ENCODE measurements at regions of chr6 and their contacts with region 1.

Region 1: GRCh38 chr6:146369866-146370265 is 173.8 kb upstream of the RAB32 start:
- DNase-seq: no peak
- ATAC-seq: no peak
- H3K4me3 ChIP-seq: no peak overlapping the region
- H3K27ac ChIP-seq: no peak overlapping the region
- H3K4me1 ChIP-seq: no peaks in the 10 kb centered on the region
- H3K27me3 ChIP-seq: no peaks in the 10 kb centered on the region
- CTCF ChIP-seq: no peak
- EP300 ChIP-seq: no peak
- POLR2A ChIP-seq: no peak
- RAD21 ChIP-seq: no peak

Region 2: DNA sequence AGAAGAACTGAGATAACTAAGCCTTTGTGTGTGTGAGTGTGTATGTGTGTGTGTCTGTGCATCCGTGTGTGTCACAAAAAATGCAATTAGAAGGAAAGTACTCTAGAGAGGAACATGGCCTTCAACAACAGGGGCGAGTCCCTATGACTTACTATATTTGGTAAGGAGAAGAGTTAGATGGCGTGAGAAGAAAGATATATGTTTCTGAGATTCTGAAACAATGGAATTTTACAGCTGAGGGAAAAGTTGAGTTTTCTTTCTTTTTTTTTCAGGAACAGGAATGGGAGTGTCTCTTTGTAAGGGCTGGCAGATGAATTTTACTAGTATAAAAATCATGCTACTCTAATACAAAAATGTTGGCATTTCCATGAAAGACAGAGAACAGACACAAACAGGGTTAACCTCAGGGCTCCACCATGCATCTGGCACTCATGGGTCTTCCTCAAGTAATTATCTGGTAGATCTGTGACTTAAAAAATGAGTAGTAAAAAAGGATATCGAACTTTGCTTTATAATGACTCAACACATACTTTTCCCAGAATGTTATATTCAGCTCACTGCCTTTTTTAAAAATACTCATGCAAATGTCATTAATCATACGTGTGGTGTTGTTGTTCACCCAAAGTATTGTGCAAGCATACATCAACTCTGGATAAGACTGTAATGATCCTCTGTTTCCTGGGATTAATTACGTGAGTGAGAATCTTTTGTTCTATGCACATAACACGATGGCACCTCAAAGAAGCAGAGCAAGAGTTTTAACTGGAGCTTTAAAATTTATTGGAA is 1959.9 kb after region 1 on chr6:
- CTCF ChIA-PET with region 1: no interaction called
- POLR2A ChIA-PET with region 1: no interaction called
- in situ Hi-C with region 1: no loop called
- intact Hi-C with region 1: loop called (anchors 5 kb)
- DNase-seq: no peak
- ATAC-seq: no peak
- H3K4me3 ChIP-seq: no peak overlapping the region
- H3K27ac ChIP-seq: no peak overlapping the region
- H3K4me1 ChIP-seq: peaks cover 17% of the 10 kb centered on the region
- H3K27me3 ChIP-seq: no peaks in the 10 kb centered on the region
- CTCF ChIP-seq: no peak
- EP300 ChIP-seq: no peak
- POLR2A ChIP-seq: no peak
- RAD21 ChIP-seq: no peak